MCF 10A (cell line): ENCODE measurements at regions of chr5 and their contacts with region 1.

Region 1: GRCh38 chr5:124790895-124791732 is 44.7 kb upstream of the ZNF608 start:
- DNase-seq: peak; percentile 73
- H3K4me3 Mint-ChIP-seq: no peak overlapping the region
- H3K27ac Mint-ChIP-seq: peak overlapping the region; percentile 54
- H3K4me1 Mint-ChIP-seq: peaks cover 21% of the 10 kb centered on the region
- H3K27me3 Mint-ChIP-seq: no peaks in the 10 kb centered on the region
- CTCF ChIP-seq: no peak

Region 2: DNA sequence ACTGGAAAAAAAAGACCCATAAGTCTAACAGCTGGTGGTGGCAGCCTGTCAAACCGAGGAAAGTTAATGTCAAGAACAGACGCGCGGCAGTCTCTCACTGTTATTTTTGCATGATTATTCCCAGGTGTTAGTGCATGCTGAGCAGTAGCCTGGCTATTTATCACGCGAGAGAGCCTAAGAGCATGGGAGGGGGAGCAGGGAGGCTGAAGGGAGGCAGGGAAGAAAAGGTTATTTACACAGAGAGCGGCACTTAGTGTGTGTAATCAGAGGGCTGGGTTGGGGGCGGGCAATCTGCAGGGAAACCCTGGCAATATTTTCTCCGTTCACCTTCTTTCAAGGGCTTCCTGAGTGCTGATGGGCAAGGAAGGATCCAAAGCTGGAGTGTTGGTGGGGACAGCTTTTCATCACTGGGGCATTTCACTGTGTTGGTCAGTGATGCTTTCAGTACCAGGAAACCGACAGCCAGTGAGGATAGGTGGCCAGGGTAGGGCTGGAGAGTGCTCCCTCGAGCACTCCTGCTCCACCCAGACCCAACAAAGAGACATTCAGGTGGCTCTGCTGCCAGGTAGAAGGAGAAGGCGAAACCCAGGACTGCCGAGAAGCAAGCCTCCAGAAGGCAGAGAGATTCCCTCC is 84.3 kb before region 1 on chr5:
- CTCF ChIA-PET with region 1: no interaction called
- POLR2A ChIA-PET with region 1: no interaction called
- intact Hi-C with region 1: no loop called
- DNase-seq: no peak
- H3K4me3 Mint-ChIP-seq: no peak overlapping the region
- H3K27ac Mint-ChIP-seq: no peak overlapping the region
- H3K4me1 Mint-ChIP-seq: no peaks in the 10 kb centered on the region
- H3K27me3 Mint-ChIP-seq: no peaks in the 10 kb centered on the region
- CTCF ChIP-seq: no peak

Region 3: DNA sequence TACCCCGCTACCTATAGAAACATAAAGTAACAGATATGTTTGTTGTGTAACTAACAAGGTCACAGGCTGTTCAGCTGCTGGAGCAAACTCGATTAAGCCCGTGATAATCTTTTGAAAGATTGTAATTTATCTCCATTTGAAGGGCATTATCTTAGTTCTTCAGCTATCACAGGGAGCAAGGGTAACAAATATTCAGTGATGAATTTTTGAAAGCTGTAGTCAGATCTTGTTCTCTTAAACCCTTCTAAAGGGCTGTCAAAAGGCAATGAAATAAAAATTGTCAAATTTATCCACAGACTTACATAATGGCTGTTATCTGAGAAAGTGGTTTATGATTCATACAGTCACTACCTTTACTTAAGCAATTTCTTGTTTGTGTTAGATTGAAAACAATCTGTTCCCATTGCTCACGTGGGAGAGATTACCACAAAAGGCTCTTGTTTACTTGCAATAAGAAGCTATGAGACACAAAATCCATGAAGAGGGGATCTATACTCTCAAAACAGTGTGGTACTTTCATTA is 33.6 kb after region 1 on chr5:
- CTCF ChIA-PET with region 1: no interaction called
- POLR2A ChIA-PET with region 1: interaction called, 28 read pairs
- intact Hi-C with region 1: no loop called
- DNase-seq: peak; percentile 96
- H3K4me3 Mint-ChIP-seq: peak overlapping the region; percentile 55
- H3K27ac Mint-ChIP-seq: peak overlapping the region; percentile 89
- H3K4me1 Mint-ChIP-seq: peaks cover 33% of the 10 kb centered on the region
- H3K27me3 Mint-ChIP-seq: no peaks in the 10 kb centered on the region
- CTCF ChIP-seq: no peak

Region 4: DNA sequence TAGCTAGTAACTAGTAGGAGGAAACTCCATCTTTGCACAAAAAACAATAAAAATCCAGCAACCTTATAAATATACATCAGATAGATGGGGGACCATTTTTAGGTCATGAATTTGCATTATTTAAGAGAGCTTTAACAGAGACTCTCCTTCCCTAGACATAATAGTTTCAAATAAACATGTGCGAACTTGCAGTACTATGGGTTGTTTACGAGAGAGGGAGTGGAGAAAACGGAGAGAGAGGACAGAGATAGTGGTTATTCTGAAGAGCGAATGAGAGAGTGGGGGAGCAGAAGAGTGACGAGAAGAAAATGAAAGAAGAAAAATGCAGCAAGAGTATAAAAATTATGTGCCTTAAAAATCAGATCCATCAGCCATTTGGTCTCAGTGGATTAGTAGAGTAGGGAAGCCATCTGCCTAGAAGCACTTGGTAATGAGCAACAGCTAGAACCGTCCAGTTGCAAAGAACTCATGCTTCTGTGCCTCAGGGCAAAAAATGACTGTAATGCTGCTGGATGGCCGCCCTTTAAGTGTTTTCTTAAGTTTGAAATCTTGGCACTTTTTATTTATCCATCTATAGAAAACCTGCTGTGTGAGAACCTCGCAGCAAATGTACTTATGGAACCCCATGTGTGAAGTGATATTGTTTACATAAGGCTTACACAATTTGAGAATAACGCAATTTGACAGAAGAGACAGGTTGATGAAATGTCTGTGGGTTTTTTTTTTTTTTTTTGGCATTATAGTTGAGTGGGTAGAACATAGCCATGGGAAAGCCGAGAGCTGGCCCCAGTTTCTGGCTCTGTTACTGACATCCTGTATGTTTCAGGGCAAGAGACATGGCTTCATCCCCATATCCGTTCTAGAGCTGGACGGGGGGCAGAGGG is 51.0 kb after region 1 on chr5:
- CTCF ChIA-PET with region 1: interaction called, 5 read pairs
- POLR2A ChIA-PET with region 1: interaction called, 6 read pairs
- intact Hi-C with region 1: loop called (anchors 2 kb)
- DNase-seq: peak; percentile 100
- H3K4me3 Mint-ChIP-seq: peak overlapping the region; percentile 38
- H3K27ac Mint-ChIP-seq: peak overlapping the region; percentile 3
- H3K4me1 Mint-ChIP-seq: peaks cover 21% of the 10 kb centered on the region
- H3K27me3 Mint-ChIP-seq: no peaks in the 10 kb centered on the region
- CTCF ChIP-seq: no peak